CD4-positive, alpha-beta memory T cell (primary cell): ENCODE measurements at regions of chr1 and their contacts with region 1.

Region 1: GRCh38 chr1:223133824-223134435 is 9.1 kb downstream of the TLR5 start:
- DNase-seq: peak; percentile 69 to 73 (median 73)
- H3K4me3 ChIP-seq: peak overlapping the region; percentile 13
- H3K4me3 Mint-ChIP-seq: peak overlapping the region; percentile 32 to 79 (median 70)
- H3K27ac ChIP-seq: no peak overlapping the region
- H3K27ac Mint-ChIP-seq: no peak overlapping the region
- H3K4me1 ChIP-seq: peaks cover 10% of the 10 kb centered on the region
- H3K4me1 Mint-ChIP-seq: peaks cover 7 to 23% (median 13%) of the 10 kb centered on the region in 4 donors
- H3K27me3 ChIP-seq: peaks cover 4% of the 10 kb centered on the region
- H3K27me3 Mint-ChIP-seq: peaks cover 9 to 14% of the 10 kb centered on the region in 2 donors

Region 2: GRCh38 chr1:223123011-223123610 is 10.8 kb before region 1 on chr1:
- CTCF ChIA-PET with region 1: interaction called, 252 read pairs
- POLR2A ChIA-PET with region 1: no interaction called
- intact Hi-C with region 1: no loop called
- DNase-seq: no peak
- H3K4me3 ChIP-seq: peak overlapping the region in 1 of 2 donors; percentile 2
- H3K4me3 Mint-ChIP-seq: peak overlapping the region; percentile 63 to 85 (median 77)
- H3K27ac ChIP-seq: no peak overlapping the region
- H3K27ac Mint-ChIP-seq: peak overlapping the region in 1 of 7 donors; percentile 30
- H3K4me1 ChIP-seq: peaks cover 5% of the 10 kb centered on the region
- H3K4me1 Mint-ChIP-seq: peaks cover 6 to 8% (median 7%) of the 10 kb centered on the region in 4 donors
- H3K27me3 ChIP-seq: no peaks in the 10 kb centered on the region
- H3K27me3 Mint-ChIP-seq: no peaks in the 10 kb centered on the region

Region 3: GRCh38 chr1:223233410-223234169 is 99.7 kb after region 1 on chr1:
- CTCF ChIA-PET with region 1: interaction called, 9 read pairs
- POLR2A ChIA-PET with region 1: interaction called, 3 read pairs
- intact Hi-C with region 1: loop called (anchors 1 kb)
- DNase-seq: no peak
- H3K4me3 ChIP-seq: no peak overlapping the region
- H3K4me3 Mint-ChIP-seq: peak overlapping the region in 3 of 8 donors; percentile 2 to 71 (median 66)
- H3K27ac ChIP-seq: no peak overlapping the region
- H3K27ac Mint-ChIP-seq: peak overlapping the region; percentile 44 to 95 (median 65)
- H3K4me1 ChIP-seq: peaks cover 62% of the 10 kb centered on the region
- H3K4me1 Mint-ChIP-seq: peaks cover 25 to 65% (median 44%) of the 10 kb centered on the region in 4 donors
- H3K27me3 ChIP-seq: no peaks in the 10 kb centered on the region
- H3K27me3 Mint-ChIP-seq: peaks cover 0 to 1% of the 10 kb centered on the region in 2 donors

Region 4: DNA sequence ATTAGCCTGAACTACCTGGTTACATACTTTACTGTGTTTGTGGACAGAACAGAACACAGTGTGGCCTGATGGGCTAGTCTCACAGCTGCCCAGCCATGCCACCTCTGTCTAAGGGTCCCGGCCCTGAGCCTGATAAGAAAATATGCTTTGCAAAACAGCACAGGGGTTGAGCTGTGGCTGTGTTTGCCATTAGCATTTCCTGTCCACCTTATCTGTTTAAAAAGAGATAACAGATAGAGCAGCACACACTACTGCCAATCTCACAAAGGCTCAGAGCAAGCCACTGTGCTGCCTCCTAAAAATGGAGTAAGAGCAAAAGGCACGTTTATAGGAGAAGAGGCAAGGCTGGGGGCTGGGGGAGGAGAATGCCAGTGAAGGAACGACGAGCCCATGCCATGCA is 135.1 kb after region 1 on chr1:
- CTCF ChIA-PET with region 1: no interaction called
- POLR2A ChIA-PET with region 1: no interaction called
- intact Hi-C with region 1: no loop called
- DNase-seq: no peak
- H3K4me3 ChIP-seq: no peak overlapping the region
- H3K4me3 Mint-ChIP-seq: no peak overlapping the region
- H3K27ac ChIP-seq: no peak overlapping the region
- H3K27ac Mint-ChIP-seq: no peak overlapping the region
- H3K4me1 ChIP-seq: no peaks in the 10 kb centered on the region
- H3K4me1 Mint-ChIP-seq: peaks cover 0 to 8% (median under 1%) of the 10 kb centered on the region in 4 donors
- H3K27me3 ChIP-seq: no peaks in the 10 kb centered on the region
- H3K27me3 Mint-ChIP-seq: peaks cover 0 to 1% of the 10 kb centered on the region in 2 donors

Region 5: DNA sequence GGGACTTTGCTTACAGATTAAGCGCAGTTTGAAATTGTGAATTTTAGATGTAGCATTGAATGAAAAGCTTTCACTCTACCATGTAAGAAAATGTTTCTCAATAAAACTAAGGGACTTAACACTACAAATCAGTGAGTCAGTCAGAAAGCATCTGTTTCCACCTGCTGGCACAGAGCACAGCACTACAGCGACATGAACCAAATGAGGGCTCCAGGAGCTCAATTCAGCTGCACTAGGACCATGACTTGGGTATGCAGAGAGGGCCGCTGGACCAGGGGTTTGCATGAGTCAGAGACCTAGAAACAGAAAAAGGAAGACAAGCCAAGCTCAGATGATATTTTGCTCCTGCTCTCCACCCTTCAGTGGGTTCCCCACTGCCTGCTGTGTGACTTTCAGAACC is 224.9 kb after region 1 on chr1:
- CTCF ChIA-PET with region 1: interaction called, 32 read pairs
- POLR2A ChIA-PET with region 1: interaction called, 4 read pairs
- intact Hi-C with region 1: loop called (anchors 5 kb)
- DNase-seq: no peak
- H3K4me3 ChIP-seq: no peak overlapping the region
- H3K4me3 Mint-ChIP-seq: no peak overlapping the region
- H3K27ac ChIP-seq: no peak overlapping the region
- H3K27ac Mint-ChIP-seq: no peak overlapping the region
- H3K4me1 ChIP-seq: peaks cover 14% of the 10 kb centered on the region
- H3K4me1 Mint-ChIP-seq: peaks cover 11 to 26% (median 14%) of the 10 kb centered on the region in 4 donors
- H3K27me3 ChIP-seq: no peaks in the 10 kb centered on the region
- H3K27me3 Mint-ChIP-seq: peaks cover 0 to 2% of the 10 kb centered on the region in 2 donors

Region 6: GRCh38 chr1:223515926-223516325 is 382.0 kb after region 1 on chr1:
- CTCF ChIA-PET with region 1: interaction called, 10 read pairs
- POLR2A ChIA-PET with region 1: no interaction called
- intact Hi-C with region 1: no loop called
- DNase-seq: no peak
- H3K4me3 ChIP-seq: peak overlapping the region in 1 of 2 donors; percentile 26
- H3K4me3 Mint-ChIP-seq: peak overlapping the region in 7 of 8 donors; percentile 49 to 89 (median 66)
- H3K27ac ChIP-seq: peak overlapping the region; percentile 42
- H3K27ac Mint-ChIP-seq: peak overlapping the region; percentile 68 to 94 (median 87)
- H3K4me1 ChIP-seq: peaks cover 39% of the 10 kb centered on the region
- H3K4me1 Mint-ChIP-seq: peaks cover 13 to 66% (median 48%) of the 10 kb centered on the region in 4 donors
- H3K27me3 ChIP-seq: no peaks in the 10 kb centered on the region
- H3K27me3 Mint-ChIP-seq: no peaks in the 10 kb centered on the region

Region 7: DNA sequence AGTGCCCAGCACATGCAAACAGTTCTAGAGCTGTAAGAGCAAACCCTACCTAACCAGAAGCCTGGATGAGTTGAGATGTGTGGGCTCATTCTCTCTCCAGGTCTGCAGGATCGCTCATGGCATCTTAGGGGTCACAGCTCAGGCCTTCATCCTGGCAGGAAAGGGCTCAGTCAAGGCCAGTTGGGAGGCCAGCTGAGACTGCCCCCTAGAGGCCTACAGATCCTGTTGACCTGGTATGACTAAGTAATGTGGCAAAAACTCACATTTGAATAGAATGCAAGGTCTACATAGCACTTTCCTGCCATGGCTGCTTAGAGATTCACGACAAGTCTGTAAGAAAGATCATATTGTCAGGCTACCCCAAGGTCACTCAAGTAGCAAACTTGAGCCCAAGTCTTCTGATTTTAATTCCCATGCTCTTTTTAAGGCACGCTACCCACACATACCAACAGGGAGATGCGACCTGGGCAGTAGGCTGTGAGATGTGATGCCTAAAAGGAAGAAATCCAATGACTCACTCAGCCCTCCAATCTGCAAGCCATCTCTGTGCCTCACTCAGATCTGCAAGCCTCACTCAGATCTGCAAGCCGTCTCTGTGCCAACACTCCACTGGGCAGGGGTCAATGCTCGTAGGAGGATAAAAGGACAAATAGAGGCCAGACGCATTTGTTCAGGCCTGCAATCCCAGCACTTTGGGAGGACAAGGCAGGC is 536.7 kb after region 1 on chr1:
- CTCF ChIA-PET with region 1: interaction called, 10 read pairs
- POLR2A ChIA-PET with region 1: no interaction called
- intact Hi-C with region 1: loop called (anchors 1 kb)
- DNase-seq: peak in 2 of 5 donors; percentile 7 to 9
- H3K4me3 ChIP-seq: no peak overlapping the region
- H3K4me3 Mint-ChIP-seq: no peak overlapping the region
- H3K27ac ChIP-seq: no peak overlapping the region
- H3K27ac Mint-ChIP-seq: no peak overlapping the region
- H3K4me1 ChIP-seq: no peaks in the 10 kb centered on the region
- H3K4me1 Mint-ChIP-seq: peaks cover 0 to 2% (median 0%) of the 10 kb centered on the region in 4 donors
- H3K27me3 ChIP-seq: no peaks in the 10 kb centered on the region
- H3K27me3 Mint-ChIP-seq: peaks cover 2 to 3% of the 10 kb centered on the region in 2 donors